AG04450 (cell line): ENCODE measurements at regions of chr7 and their contacts with region 1.

Region 1: DNA sequence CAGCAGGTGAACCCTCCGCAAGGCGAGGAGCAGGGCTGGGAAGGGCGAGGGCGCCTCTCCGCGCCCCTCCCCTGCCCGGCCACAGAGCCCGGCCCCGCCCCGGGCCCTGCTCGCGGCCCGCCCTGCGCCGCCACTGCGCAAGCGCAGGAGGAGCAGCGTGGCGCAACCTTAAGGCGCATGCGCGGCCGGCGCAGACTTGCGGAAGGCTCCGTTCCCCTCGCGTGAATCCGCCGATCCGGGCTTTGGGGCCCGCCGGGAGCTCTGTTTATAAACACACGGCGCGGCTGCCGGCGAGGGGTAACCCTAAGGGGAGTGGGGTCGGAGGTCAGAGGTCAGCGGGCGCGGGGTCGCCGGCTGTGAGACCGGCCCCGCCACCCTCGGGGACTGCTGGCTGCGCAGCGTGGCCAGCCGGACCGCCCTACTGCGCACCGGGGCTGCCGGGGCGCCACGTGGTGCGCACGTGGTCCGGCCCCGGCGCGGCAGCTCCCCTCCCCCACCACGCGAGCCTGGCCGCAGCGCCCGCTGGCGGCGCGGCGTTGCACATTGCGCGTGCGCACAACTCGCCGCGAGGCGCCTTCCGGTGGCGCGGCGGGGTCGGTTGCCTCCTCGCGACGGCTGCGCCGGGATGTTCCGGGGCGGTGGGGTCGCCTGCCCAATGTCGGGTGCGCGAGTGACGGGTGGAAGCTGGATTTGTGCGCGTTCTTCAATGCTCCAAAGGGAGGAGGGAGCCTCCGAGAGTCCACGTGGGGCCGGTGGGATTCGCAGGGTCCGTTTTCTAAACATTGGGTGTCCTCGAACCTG is 40.2 kb upstream of the FOXK1 start:
- DNase-seq: peak; percentile 86
- H3K4me3 ChIP-seq: peak overlapping the region; percentile 66
- H3K27ac ChIP-seq: peak overlapping the region; percentile 71
- H3K27me3 ChIP-seq: no peaks in the 10 kb centered on the region
- CTCF ChIP-seq: peak; percentile 31

Region 2: DNA sequence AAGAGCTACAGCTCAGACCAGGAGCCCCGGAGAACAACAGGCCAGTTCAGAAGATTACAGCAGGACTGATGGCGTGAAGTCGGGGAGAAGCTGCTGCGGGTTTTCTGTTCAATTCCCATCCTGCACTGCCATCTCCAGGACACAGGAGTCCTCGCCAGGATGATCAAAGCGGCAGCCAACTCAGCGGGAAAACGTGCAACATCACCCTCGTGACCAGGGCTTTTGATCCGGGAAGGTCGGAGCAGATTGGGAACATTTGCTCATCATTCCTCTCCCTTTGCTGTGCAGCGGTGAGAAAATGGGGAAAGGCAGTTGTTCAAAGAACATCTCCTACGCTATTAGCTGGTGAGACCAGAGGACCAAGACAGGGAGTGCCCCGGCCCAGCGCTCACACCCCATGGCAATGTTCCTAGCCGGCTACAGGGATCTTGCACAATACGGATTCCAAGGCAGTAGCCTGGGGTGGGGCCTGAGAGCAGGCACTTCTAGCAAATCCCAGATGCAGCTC is 10.1 kb before region 1 on chr7:
- CTCF ChIA-PET with region 1: interaction called, 11 read pairs
- POLR2A ChIA-PET with region 1: interaction called, 5 read pairs
- DNase-seq: peak; percentile 85
- H3K4me3 ChIP-seq: peak overlapping the region; percentile 57
- H3K27ac ChIP-seq: peak overlapping the region; percentile 80
- H3K27me3 ChIP-seq: peaks cover 7% of the 10 kb centered on the region
- CTCF ChIP-seq: peak; percentile 82

Region 3: GRCh38 chr7:4667776-4668509 is 26.1 kb after region 1 on chr7:
- CTCF ChIA-PET with region 1: interaction called, 6 read pairs
- POLR2A ChIA-PET with region 1: interaction called, 12 read pairs
- DNase-seq: peak; percentile 72
- H3K4me3 ChIP-seq: peak overlapping the region; percentile 17
- H3K27ac ChIP-seq: peak overlapping the region; percentile 98
- H3K27me3 ChIP-seq: no peaks in the 10 kb centered on the region
- CTCF ChIP-seq: no peak

Region 4: GRCh38 chr7:4681886-4682620 is 40.2 kb after region 1 on chr7 and contains the start of gene FOXK1:
- CTCF ChIA-PET with region 1: interaction called, 3 read pairs
- POLR2A ChIA-PET with region 1: interaction called, 26 read pairs
- DNase-seq: no peak
- H3K4me3 ChIP-seq: peak within 1 kb of the TSS; percentile 87
- H3K27ac ChIP-seq: peak within 1 kb of the TSS; percentile 95
- H3K27me3 ChIP-seq: no peaks in the 10 kb centered on the region
- CTCF ChIP-seq: no peak
- polyA plus RNA-seq, gene FOXK1: 3.4 and 4.7 TPM in 2 replicates

Region 5: GRCh38 chr7:4751398-4751947 is 109.6 kb after region 1 on chr7:
- CTCF ChIA-PET with region 1: interaction called, 4 read pairs
- POLR2A ChIA-PET with region 1: interaction called, 10 read pairs
- DNase-seq: no peak
- H3K4me3 ChIP-seq: no peak overlapping the region
- H3K27ac ChIP-seq: no peak overlapping the region
- H3K27me3 ChIP-seq: no peaks in the 10 kb centered on the region
- CTCF ChIP-seq: no peak

Region 6: DNA sequence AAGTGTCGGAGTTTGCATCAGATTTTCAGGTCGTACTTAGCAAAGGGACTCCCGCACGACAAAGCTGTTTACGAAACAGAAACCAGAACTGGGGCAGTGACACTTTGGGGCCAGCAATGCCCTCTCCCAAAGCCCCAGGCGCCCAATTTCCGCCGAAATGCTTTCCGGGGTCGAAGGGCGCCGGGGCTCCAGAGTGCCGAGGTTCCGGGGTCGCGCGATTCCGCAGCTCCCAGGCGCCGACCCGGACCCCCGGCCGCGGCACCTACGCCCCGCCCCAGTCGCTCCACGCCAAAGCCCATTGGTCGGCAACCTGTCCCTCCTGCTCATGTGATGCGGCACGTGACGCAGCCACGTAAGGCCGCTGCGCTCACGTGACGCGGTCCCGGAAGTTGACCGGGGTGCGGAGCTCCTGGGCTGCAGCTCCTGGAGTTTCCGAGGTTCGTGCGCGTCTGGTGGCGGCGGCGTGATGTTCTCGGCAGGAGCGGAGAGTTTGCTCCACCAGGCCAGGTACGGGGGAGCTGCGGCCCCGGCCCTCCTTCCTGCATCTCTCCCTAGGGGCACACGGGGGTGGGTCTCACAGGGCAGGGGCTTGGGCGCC is 133.5 kb after region 1 on chr7 and contains the start of gene AP5Z1:
- CTCF ChIA-PET with region 1: interaction called, 3 read pairs
- POLR2A ChIA-PET with region 1: interaction called, 24 read pairs
- DNase-seq: peak; percentile 92
- H3K4me3 ChIP-seq: peak within 1 kb of the TSS; percentile 98
- H3K27ac ChIP-seq: peak within 1 kb of the TSS; percentile 93
- H3K27me3 ChIP-seq: no peaks in the 10 kb centered on the region
- CTCF ChIP-seq: no peak
- polyA plus RNA-seq, gene AP5Z1: 12.6 and 18.9 TPM in 2 replicates

Region 7: DNA sequence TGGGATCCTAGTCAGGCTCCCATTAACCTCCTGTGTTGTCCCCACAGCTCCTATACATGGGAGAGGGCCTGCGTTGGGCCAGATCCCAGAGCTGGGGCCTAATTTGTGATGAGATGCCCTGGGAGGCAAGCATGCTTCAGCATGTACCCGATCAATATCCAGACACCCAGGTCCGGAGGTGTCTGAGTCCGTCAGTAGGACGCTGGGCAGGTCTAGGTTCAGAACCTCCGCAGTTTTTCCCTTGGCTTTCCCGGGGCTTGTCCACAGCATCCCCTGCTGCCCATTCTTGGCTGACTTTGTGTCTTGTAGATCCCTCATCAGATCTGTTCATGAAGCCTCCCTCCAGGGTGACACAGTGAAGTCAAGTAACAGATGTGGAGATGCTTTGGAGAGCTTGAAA is 371.1 kb after region 1 on chr7:
- CTCF ChIA-PET with region 1: no interaction called
- POLR2A ChIA-PET with region 1: no interaction called
- DNase-seq: no peak
- H3K4me3 ChIP-seq: no peak overlapping the region
- H3K27ac ChIP-seq: no peak overlapping the region
- H3K27me3 ChIP-seq: no peaks in the 10 kb centered on the region
- CTCF ChIP-seq: no peak